ENCODE measurements at regions of chr2 and their contacts with region 1.

Region 1: GRCh38 chr2:238459081-238459629 is 32.4 kb downstream of the ASB1 start:
- DNase-seq: no peak
- H3K4me3 Mint-ChIP-seq: no peak overlapping the region
- H3K27ac Mint-ChIP-seq: no peak overlapping the region
- H3K4me1 Mint-ChIP-seq: no peaks in the 10 kb centered on the region
- H3K27me3 Mint-ChIP-seq: peaks cover 40% of the 10 kb centered on the region

Region 2: DNA sequence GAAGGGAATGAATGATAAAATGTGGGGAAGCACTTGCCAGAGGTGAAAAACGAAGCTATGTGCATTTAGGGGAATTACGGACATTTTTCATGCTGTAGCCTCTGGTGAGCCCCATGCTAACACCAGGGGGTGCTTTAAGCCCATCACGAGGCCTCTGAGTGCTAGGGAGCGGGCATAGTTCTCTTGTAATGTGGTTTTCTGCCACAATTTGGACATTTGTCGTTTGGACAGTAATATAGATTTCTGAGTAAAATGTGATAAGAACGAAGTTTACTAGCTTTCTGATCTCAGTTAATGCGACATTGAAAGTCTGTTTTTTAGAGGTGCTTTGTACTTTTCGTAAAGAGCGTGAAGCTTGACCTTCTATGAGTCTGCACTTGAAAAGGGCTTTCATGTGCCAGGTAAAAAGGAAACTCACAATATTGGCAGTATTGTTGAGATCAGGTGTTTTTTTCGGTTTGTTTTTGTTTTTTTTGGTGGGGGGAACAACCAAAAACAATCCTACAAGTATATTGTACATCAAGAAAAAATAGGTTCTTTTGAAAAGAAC is 88.3 kb before region 1 on chr2:
- CTCF ChIA-PET with region 1: interaction called, 30 read pairs
- DNase-seq: peak; percentile 72
- H3K4me3 Mint-ChIP-seq: no peak overlapping the region
- H3K27ac Mint-ChIP-seq: no peak overlapping the region
- H3K4me1 Mint-ChIP-seq: peaks cover 5% of the 10 kb centered on the region
- H3K27me3 Mint-ChIP-seq: no peaks in the 10 kb centered on the region